Activated CD8-positive, alpha-beta T cell treated with anti-CD3 and anti-CD28 coated beads, Interleukin-2, amount 10 ng/mL, durations not matched to agents 7 days and 5 days (primary cell): ENCODE measurements at regions of chr10 and their contacts with region 1.

Region 1: DNA sequence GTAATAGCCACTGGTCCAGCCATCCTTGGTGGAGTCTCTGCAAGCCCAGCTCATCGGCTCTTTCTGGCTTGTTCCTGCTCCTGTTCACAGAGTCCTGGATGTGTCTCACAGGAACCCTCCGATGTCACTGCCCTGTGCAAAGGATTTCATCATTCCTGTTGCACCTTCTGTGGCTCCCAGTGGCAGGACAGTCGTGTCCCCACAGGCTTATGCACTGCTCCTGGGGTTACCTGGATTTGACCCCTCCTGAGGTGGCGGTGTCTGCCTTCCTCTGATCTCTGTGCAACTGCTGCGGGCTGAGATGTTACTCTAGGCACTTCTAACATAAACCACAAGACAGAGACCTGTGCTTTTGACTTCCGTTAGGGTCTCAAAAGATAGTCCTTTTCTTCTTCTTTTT is 30.6 kb downstream of the APBB1IP start:
- DNase-seq: peak; percentile 79
- ATAC-seq: peak; percentile 90
- H3K4me3 Mint-ChIP-seq: peak overlapping the region; percentile 69
- H3K27ac Mint-ChIP-seq: peak overlapping the region; percentile 91
- H3K4me1 Mint-ChIP-seq: peaks cover 86% of the 10 kb centered on the region
- H3K27me3 Mint-ChIP-seq: no peaks in the 10 kb centered on the region

Region 2: DNA sequence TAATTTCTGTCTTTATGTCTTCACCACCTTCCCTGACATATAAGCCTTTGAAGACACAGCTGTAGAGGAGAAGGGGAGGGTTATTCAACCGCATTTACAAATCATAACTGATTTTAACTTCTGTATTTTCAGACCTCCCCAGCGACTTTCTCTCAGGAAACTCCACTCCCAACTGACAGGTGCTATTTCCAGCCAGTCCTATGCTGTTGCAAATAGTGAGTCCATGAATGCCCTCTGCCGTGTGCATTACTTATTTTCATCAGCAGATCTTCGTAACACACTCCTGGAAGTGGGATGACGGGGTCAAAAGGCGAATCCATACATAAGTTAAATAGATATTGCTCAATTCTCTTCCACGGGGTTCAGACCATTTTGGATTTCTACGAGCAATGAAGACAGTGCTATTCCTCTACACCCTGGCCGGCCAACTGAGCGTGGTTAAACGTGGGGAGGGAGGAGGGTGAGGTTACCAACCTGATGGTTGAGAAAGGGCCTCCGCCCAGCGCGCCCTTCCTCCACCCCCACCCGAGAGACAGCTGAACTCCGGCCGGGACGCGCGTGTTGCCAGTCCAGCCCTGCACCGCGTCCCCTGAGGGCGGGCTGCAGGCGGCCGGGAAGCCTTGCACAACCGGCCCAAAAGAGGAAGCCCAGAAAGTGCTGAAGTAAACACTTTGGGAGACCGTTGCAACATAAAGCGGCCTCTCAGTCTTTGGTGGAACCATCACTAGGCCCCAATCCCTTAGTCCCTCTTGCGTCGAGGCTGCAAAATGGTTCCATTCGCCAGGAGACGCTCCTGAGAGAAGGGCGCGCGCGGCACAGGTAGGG is 30.9 kb before region 1 on chr10 and contains the start of gene APBB1IP:
- CTCF ChIA-PET with region 1: interaction called, 3 read pairs
- POLR2A ChIA-PET with region 1: interaction called, 14 read pairs
- DNase-seq: peak; percentile 69
- ATAC-seq: peak; percentile 61
- H3K4me3 Mint-ChIP-seq: peak within 1 kb of the TSS; percentile 96
- H3K27ac Mint-ChIP-seq: peak within 1 kb of the TSS; percentile 95
- H3K4me1 Mint-ChIP-seq: peaks cover 41% of the 10 kb centered on the region
- H3K27me3 Mint-ChIP-seq: no peaks in the 10 kb centered on the region
- total RNA-seq, gene APBB1IP: 75.9 to 76.0 TPM

Region 3: GRCh38 chr10:26448706-26449435 is 19.8 kb before region 1 on chr10:
- CTCF ChIA-PET with region 1: interaction called, 26 read pairs
- POLR2A ChIA-PET with region 1: interaction called, 14 read pairs
- DNase-seq: peak; percentile 92
- ATAC-seq: peak; percentile 83
- H3K4me3 Mint-ChIP-seq: peak overlapping the region; percentile 65
- H3K27ac Mint-ChIP-seq: peak overlapping the region; percentile 90
- H3K4me1 Mint-ChIP-seq: peaks cover 85% of the 10 kb centered on the region
- H3K27me3 Mint-ChIP-seq: no peaks in the 10 kb centered on the region